ENCODE measurements at regions of chr3 and their contacts with region 1.

Region 1: GRCh38 chr3:149717391-149718056 is 34.8 kb downstream of the COMMD2 start:
- H3K4me3 ChIP-seq: no peak overlapping the region
- H3K27ac ChIP-seq: no peak overlapping the region
- H3K4me1 ChIP-seq: no peaks in the 10 kb centered on the region
- CTCF ChIP-seq: no peak

Region 2: GRCh38 chr3:149566292-149566975 is 151.1 kb before region 1 on chr3:
- CTCF ChIA-PET with region 1: interaction called, 16 read pairs
- POLR2A ChIA-PET with region 1: no interaction called
- H3K4me3 ChIP-seq: no peak overlapping the region
- H3K27ac ChIP-seq: no peak overlapping the region
- H3K4me1 ChIP-seq: no peaks in the 10 kb centered on the region
- CTCF ChIP-seq: no peak

Region 3: DNA sequence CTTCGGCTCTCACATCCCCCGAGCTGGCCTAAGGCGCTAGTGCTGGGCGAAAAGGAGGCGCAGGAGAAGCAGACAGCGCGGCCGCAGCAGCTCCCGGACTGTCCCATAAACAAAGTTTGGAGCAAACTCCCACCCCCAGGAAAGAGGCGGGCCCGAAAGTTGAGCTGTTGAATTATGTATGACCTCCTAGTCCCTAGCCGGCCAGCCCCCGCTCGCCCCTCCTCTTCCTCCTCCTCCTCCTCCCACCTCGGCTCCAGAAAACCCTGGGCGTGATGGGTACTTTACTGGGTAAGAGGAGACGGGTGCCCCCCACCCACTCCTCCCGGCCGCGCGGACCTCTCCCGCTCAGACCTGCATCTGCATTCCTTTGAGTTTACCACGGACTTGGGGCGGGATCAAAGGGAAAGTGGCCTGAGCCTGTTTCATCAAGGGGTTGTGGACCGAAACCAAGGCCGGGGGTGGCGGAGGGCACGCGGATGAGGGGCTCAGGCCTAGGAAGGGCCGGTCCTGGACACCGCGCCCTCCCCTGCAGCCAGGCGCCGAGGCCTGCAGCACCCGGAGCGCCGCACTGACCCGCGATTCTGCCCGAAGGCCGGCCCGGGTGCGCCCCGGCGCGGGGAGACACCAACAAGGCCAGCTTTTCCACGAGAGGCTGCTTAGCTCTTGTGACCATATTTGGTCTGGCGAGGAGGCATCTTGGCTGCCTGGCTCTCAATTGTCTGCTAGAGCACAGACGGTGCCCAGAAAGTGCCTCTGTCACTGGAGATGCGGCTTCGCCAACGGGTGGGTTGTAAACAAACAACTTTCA is 59.4 kb before region 1 on chr3 and contains the start of gene WWTR1:
- CTCF ChIA-PET with region 1: interaction called, 16 read pairs
- POLR2A ChIA-PET with region 1: interaction called, 3 read pairs
- H3K4me3 ChIP-seq: peak within 1 kb of the TSS; percentile 60
- H3K27ac ChIP-seq: peak within 1 kb of the TSS; percentile 91
- H3K4me1 ChIP-seq: peaks cover 3% of the 10 kb centered on the region; the same call in 1 of the 2 replicates
- CTCF ChIP-seq: peak; percentile 80

Region 4: DNA sequence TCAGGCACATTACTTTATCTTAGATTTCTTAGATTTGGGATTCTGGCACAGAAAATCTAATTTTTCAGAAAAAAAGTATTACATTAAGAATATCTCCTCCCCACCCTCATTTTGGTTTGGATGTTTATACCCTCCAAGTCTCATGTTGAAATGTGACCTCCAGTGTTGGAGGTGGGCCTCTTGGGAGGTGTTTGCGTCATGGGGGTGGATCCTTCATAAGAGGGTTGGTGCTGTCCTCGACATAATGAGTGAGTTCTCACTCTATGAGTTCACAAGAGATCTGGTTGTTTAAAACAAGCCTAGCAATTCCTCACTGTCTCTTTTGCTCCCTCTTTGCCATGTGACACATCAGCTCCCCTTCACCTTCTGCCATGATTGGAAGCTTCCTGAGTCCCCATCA is 14.1 kb before region 1 on chr3:
- CTCF ChIA-PET with region 1: interaction called, 12 read pairs
- POLR2A ChIA-PET with region 1: no interaction called
- H3K4me3 ChIP-seq: no peak overlapping the region
- H3K27ac ChIP-seq: no peak overlapping the region
- H3K4me1 ChIP-seq: no peaks in the 10 kb centered on the region
- CTCF ChIP-seq: no peak

Region 5: DNA sequence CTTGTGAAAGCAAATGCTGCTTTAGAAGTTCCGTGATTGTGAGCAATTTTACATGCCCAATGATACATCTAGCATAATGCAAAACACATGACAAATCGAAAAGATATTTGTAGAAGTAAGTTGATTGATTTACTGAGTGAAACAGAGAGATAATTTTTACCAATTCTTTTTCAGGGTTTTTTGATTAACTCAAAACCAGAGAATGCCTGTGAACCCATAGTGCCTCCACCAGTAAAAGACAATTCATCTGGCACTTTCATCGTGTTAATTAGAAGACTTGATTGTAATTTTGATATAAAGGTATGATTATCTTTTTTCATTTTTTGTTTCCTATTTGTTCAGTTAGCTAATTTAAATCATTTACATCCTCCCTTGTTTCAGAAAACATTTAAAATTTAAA is 154.3 kb after region 1 on chr3:
- CTCF ChIA-PET with region 1: no interaction called
- POLR2A ChIA-PET with region 1: no interaction called
- H3K4me3 ChIP-seq: no peak overlapping the region
- H3K27ac ChIP-seq: no peak overlapping the region
- H3K4me1 ChIP-seq: no peaks in the 10 kb centered on the region
- CTCF ChIP-seq: no peak

Region 6: GRCh38 chr3:150146991-150147761 is 429.7 kb after region 1 on chr3:
- CTCF ChIA-PET with region 1: no interaction called
- POLR2A ChIA-PET with region 1: no interaction called
- H3K4me3 ChIP-seq: no peak overlapping the region
- H3K27ac ChIP-seq: no peak overlapping the region
- H3K4me1 ChIP-seq: no peaks in the 10 kb centered on the region
- CTCF ChIP-seq: no peak